ENCODE measurements at regions of chr1 and their contacts with region 1.

Region 1: DNA sequence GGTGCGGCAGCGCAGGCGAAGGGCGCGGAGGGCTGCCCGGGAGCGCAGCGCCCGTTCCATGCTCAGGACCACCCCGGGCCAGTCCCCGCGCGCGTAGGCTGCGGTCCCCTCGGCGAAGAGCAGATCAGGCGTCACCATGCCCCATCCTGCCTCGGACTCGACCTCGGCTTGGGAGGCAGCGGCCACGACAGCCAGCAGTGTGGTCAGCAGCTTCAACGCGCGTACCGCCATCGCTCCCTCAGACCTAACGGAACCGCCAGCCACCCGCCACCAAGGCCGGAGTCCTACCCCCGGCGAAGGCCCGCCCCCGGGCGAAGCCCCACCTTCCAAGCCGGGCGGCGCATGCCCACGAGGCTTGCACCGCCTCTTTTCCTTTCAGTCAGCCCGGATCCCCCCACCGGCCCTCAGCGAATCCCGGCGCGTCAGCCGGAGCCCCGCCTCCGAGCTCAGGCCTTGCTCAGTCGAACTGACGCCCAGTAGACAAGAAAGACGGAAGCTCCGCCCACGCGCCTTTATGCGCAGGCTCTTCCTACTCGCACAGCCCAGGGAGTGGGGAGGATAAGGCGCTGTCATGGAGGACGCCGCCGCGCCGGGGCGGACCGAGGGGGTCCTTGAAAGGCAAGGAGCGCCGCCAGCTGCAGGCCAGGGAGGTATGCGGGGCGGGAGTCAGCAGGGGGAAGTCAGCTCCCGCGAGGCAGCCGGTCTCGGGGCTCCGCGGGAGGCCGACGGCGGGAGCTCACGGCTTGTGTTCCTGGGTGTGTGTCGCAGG is at the starts of genes C1orf50 and P3H1:
- DNase-seq: peak; percentile 100
- H3K4me3 Mint-ChIP-seq: no peak within 1 kb of the TSS
- H3K27ac Mint-ChIP-seq: peak within 1 kb of the TSS; percentile 97
- H3K4me1 Mint-ChIP-seq: peaks cover 34% of the 10 kb centered on the region
- H3K27me3 Mint-ChIP-seq: no peaks in the 10 kb centered on the region
- total RNA-seq, gene C1orf50: 7.0 to 9.4 TPM
- total RNA-seq, gene P3H1: 39.7 to 41.5 TPM

Region 2: GRCh38 chr1:42321731-42322130 is 445.2 kb before region 1 on chr1:
- CTCF ChIA-PET with region 1: no interaction called
- POLR2A ChIA-PET with region 1: interaction called, 11 read pairs
- DNase-seq: no peak
- H3K4me3 Mint-ChIP-seq: no peak overlapping the region
- H3K27ac Mint-ChIP-seq: peak overlapping the region; percentile 37
- H3K4me1 Mint-ChIP-seq: peaks cover 66% of the 10 kb centered on the region
- H3K27me3 Mint-ChIP-seq: no peaks in the 10 kb centered on the region

Region 3: DNA sequence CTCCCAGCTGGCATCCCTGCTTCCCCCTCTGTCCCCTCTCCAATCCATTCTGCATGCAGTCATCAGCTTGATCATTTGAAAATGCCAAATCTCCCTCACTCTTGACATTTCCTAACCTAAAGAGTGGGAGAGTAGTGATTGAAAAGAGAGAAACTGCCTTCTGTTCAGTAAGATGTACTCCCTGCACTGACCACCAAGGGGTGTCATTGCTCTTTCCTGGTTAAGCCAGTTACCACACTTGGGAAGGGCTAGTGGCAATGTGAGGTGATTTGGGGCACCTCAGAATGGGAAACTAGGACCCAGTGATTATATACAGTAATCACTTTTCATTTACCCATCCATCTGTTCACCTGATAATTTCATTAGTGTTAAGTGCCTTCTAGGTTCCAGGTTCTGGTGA is 10.9 kb after region 1 on chr1:
- CTCF ChIA-PET with region 1: interaction called, 21 read pairs
- POLR2A ChIA-PET with region 1: interaction called, 7 read pairs
- DNase-seq: peak; percentile 40
- H3K4me3 Mint-ChIP-seq: no peak overlapping the region
- H3K27ac Mint-ChIP-seq: no peak overlapping the region
- H3K4me1 Mint-ChIP-seq: peaks cover 23% of the 10 kb centered on the region
- H3K27me3 Mint-ChIP-seq: no peaks in the 10 kb centered on the region